ENCODE measurements at regions of chr9 and their contacts with region 1.

Region 1: GRCh38 chr9:33466565-33467495 is 6.9 kb downstream of the NOL6 start:
- DNase-seq: peak; percentile 57 to 78 (median 66)
- H3K4me3 ChIP-seq: no peak overlapping the region
- H3K4me3 Mint-ChIP-seq: peak overlapping the region in 1 of 7 donors; percentile 42
- H3K27ac ChIP-seq: no peak overlapping the region
- H3K27ac Mint-ChIP-seq: peak overlapping the region in 3 of 8 donors; percentile 12 to 68 (median 36)
- H3K4me1 ChIP-seq: peaks cover 3% of the 10 kb centered on the region
- H3K4me1 Mint-ChIP-seq: peaks cover 5 to 7% (median 6%) of the 10 kb centered on the region in 3 donors
- H3K27me3 ChIP-seq: no peaks in the 10 kb centered on the region
- H3K27me3 Mint-ChIP-seq: no peaks in the 10 kb centered on the region

Region 2: GRCh38 chr9:33374634-33375213 is 92.1 kb before region 1 on chr9:
- CTCF ChIA-PET with region 1: interaction called, 62 read pairs
- POLR2A ChIA-PET with region 1: no interaction called
- DNase-seq: peak; percentile 32 to 72 (median 45)
- H3K4me3 ChIP-seq: no peak overlapping the region
- H3K4me3 Mint-ChIP-seq: no peak overlapping the region
- H3K27ac ChIP-seq: no peak overlapping the region
- H3K27ac Mint-ChIP-seq: peak overlapping the region in 2 of 8 donors; percentile 39 to 79
- H3K4me1 ChIP-seq: no peaks in the 10 kb centered on the region
- H3K4me1 Mint-ChIP-seq: peaks cover 5 to 7% (median 7%) of the 10 kb centered on the region in 3 donors
- H3K27me3 ChIP-seq: no peaks in the 10 kb centered on the region
- H3K27me3 Mint-ChIP-seq: peaks cover 0 to 2% of the 10 kb centered on the region in 2 donors

Region 3: GRCh38 chr9:33404788-33405362 is 62.0 kb before region 1 on chr9:
- CTCF ChIA-PET with region 1: interaction called, 105 read pairs
- POLR2A ChIA-PET with region 1: interaction called, 4 read pairs
- DNase-seq: no peak
- H3K4me3 ChIP-seq: no peak overlapping the region
- H3K4me3 Mint-ChIP-seq: no peak overlapping the region
- H3K27ac ChIP-seq: no peak overlapping the region
- H3K27ac Mint-ChIP-seq: peak overlapping the region in 4 of 8 donors; percentile 40 to 76 (median 51)
- H3K4me1 ChIP-seq: no peaks in the 10 kb centered on the region
- H3K4me1 Mint-ChIP-seq: no peaks in the 10 kb centered on the region
- H3K27me3 ChIP-seq: no peaks in the 10 kb centered on the region
- H3K27me3 Mint-ChIP-seq: peaks cover 0 to 4% of the 10 kb centered on the region in 2 donors

Region 4: DNA sequence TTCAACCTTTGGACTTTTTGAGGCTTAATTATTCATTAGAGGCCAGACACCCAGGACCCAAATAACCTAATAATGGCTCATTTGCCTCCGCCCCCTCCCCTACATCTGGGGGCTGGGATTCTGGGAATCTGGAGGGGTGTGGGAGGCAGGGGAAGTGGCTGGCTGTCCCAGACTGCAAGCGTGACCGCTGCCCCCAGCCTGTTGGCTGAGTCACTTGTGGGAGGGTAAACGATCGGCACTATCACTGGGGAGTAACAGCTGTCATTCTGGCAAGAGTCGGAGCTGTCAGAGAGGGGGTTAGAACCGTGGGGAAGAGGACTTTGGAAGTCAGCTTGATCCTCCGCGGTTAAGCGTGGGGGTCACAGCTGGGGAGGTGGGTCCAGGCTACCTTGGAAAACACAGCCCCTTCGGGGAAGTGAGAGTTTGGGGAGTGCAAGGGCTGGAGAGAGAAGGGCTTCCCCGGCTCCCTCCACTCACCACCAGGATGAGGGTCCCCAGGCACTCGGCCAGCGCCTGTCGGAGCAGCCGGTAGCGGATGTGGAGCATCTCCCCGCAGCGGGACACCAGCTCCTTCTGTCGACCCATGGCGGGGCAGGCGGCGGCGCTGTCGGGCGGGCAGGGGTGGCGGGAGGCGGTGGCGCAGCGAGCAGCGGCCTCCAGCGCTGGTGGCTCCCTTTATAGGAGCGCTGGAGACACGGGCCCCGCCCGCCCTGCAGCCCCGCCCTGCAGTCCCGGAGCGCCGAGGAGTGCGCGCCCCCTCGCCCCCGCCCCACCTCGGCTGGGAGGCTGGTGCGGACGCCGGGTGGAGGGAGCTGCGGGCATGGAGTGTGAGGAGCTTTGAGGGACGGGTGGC is 19.7 kb before region 1 on chr9 and contains the start of gene AQP3:
- CTCF ChIA-PET with region 1: interaction called, 202 read pairs
- POLR2A ChIA-PET with region 1: interaction called, 8 read pairs
- DNase-seq: peak; percentile 51 to 80 (median 72)
- H3K4me3 ChIP-seq: peak within 1 kb of the TSS; percentile 99
- H3K4me3 Mint-ChIP-seq: peak within 1 kb of the TSS; percentile 85 to 99 (median 88)
- H3K27ac ChIP-seq: peak within 1 kb of the TSS; percentile 86
- H3K27ac Mint-ChIP-seq: peak within 1 kb of the TSS; percentile 87 to 100 (median 97)
- H3K4me1 ChIP-seq: peaks cover 35% of the 10 kb centered on the region
- H3K4me1 Mint-ChIP-seq: peaks cover 38 to 62% (median 47%) of the 10 kb centered on the region in 3 donors
- H3K27me3 ChIP-seq: no peaks in the 10 kb centered on the region
- H3K27me3 Mint-ChIP-seq: no peaks in the 10 kb centered on the region
- total RNA-seq, gene AQP3: 8.7 to 9.3 TPM

Region 5: DNA sequence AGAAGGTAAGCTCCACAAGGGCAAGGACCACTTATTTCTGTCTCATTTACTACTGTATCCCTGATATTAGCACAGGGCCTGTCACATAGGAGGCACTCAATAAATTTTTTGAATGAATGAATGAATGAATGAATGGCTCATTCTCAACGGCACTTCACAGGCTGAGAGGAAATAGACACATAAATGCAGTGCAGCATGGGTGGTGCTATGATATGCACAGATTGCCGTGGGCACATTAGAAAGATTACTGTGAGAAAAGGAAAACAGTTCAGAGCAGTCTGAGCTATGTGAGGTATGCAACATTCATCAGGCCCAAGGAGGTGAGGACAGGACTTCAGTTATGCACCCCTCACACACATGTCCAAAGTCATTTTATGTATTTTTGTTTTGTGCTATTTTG is 13.3 kb after region 1 on chr9:
- CTCF ChIA-PET with region 1: interaction called, 24 read pairs
- POLR2A ChIA-PET with region 1: no interaction called
- DNase-seq: no peak
- H3K4me3 ChIP-seq: no peak overlapping the region
- H3K4me3 Mint-ChIP-seq: no peak overlapping the region
- H3K27ac ChIP-seq: no peak overlapping the region
- H3K27ac Mint-ChIP-seq: no peak overlapping the region
- H3K4me1 ChIP-seq: no peaks in the 10 kb centered on the region
- H3K4me1 Mint-ChIP-seq: no peaks in the 10 kb centered on the region
- H3K27me3 ChIP-seq: no peaks in the 10 kb centered on the region
- H3K27me3 Mint-ChIP-seq: no peaks in the 10 kb centered on the region

Measured in CD8-positive, alpha-beta memory T cell (primary cell).